ENCODE measurements at regions of chr11 and their contacts with region 1.

Region 1: DNA sequence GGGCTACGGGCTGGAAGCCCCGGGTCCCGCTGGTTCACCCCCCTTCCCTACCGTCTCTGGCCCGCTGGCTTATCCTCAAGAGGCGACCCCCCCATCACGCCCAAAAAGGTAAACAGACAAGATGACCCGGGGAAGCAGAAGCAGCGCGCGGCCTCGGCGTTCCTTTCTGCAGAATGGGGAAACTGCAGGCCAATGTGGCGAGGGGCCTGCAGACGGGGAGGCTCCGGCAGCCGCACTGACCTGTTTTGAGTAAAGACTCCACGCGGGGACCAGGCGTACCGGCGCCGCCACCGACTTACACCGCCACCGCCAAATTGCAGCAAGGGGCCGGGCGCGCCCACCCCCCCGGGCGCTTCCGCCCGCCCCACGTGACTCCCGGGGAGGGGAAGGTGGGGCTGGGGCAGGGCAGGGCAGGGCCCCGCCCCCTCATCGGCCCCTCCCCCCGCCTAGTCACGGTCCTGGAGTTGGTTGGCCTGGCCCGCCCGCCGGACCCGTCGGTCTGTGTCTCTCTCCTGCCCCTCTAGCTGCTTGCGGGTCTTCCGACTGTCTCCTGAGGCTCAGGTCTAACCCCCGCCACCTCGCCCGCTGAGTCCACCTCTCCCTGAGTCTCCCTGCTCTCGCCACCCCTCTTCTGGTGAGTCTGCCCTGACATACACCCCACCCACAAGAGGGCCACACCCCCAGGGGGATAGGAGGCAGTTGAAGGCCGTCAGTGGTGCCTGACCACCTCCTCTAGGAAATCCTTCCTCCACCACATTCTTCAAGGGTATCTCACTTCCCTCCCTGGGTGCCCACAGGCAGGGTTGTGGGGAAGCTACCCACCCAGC is at the start of gene ARAP1:
- DNase-seq: peak; percentile 73 to 85 (median 74)
- H3K4me3 ChIP-seq: peak within 1 kb of the TSS; percentile 78 to 89
- H3K4me3 Mint-ChIP-seq: peak within 1 kb of the TSS; percentile 92 to 99 (median 95)
- H3K27ac ChIP-seq: peak within 1 kb of the TSS; percentile 75
- H3K27ac Mint-ChIP-seq: peak within 1 kb of the TSS; percentile 94 to 98 (median 96)
- H3K4me1 ChIP-seq: peaks cover 50% of the 10 kb centered on the region
- H3K4me1 Mint-ChIP-seq: peaks cover 32 to 55% (median 46%) of the 10 kb centered on the region in 4 donors
- H3K27me3 ChIP-seq: no peaks in the 10 kb centered on the region
- H3K27me3 Mint-ChIP-seq: no peaks in the 10 kb centered on the region
- total RNA-seq, gene ARAP1: 144 to 157 TPM

Region 2: GRCh38 chr11:72454791-72455190 is 297.5 kb before region 1 on chr11:
- CTCF ChIA-PET with region 1: no interaction called
- POLR2A ChIA-PET with region 1: no interaction called
- intact Hi-C with region 1: no loop called
- DNase-seq: no peak
- H3K4me3 ChIP-seq: no peak overlapping the region
- H3K4me3 Mint-ChIP-seq: no peak overlapping the region
- H3K27ac ChIP-seq: no peak overlapping the region
- H3K27ac Mint-ChIP-seq: no peak overlapping the region
- H3K4me1 ChIP-seq: no peaks in the 10 kb centered on the region
- H3K4me1 Mint-ChIP-seq: no peaks in the 10 kb centered on the region
- H3K27me3 ChIP-seq: no peaks in the 10 kb centered on the region
- H3K27me3 Mint-ChIP-seq: peaks cover 4 to 11% of the 10 kb centered on the region in 2 donors

Region 3: GRCh38 chr11:72736452-72737069 is 15.7 kb before region 1 on chr11:
- CTCF ChIA-PET with region 1: interaction called, 3 read pairs
- POLR2A ChIA-PET with region 1: interaction called, 9 read pairs
- intact Hi-C with region 1: loop called (anchors 2 kb)
- DNase-seq: peak; percentile 71 to 90 (median 78)
- H3K4me3 ChIP-seq: no peak overlapping the region
- H3K4me3 Mint-ChIP-seq: peak overlapping the region; percentile 6 to 74 (median 54)
- H3K27ac ChIP-seq: peak overlapping the region; percentile 54
- H3K27ac Mint-ChIP-seq: peak overlapping the region; percentile 89 to 100 (median 98)
- H3K4me1 ChIP-seq: peaks cover 59% of the 10 kb centered on the region
- H3K4me1 Mint-ChIP-seq: peaks cover 43 to 65% (median 54%) of the 10 kb centered on the region in 4 donors
- H3K27me3 ChIP-seq: no peaks in the 10 kb centered on the region
- H3K27me3 Mint-ChIP-seq: no peaks in the 10 kb centered on the region

Region 4: DNA sequence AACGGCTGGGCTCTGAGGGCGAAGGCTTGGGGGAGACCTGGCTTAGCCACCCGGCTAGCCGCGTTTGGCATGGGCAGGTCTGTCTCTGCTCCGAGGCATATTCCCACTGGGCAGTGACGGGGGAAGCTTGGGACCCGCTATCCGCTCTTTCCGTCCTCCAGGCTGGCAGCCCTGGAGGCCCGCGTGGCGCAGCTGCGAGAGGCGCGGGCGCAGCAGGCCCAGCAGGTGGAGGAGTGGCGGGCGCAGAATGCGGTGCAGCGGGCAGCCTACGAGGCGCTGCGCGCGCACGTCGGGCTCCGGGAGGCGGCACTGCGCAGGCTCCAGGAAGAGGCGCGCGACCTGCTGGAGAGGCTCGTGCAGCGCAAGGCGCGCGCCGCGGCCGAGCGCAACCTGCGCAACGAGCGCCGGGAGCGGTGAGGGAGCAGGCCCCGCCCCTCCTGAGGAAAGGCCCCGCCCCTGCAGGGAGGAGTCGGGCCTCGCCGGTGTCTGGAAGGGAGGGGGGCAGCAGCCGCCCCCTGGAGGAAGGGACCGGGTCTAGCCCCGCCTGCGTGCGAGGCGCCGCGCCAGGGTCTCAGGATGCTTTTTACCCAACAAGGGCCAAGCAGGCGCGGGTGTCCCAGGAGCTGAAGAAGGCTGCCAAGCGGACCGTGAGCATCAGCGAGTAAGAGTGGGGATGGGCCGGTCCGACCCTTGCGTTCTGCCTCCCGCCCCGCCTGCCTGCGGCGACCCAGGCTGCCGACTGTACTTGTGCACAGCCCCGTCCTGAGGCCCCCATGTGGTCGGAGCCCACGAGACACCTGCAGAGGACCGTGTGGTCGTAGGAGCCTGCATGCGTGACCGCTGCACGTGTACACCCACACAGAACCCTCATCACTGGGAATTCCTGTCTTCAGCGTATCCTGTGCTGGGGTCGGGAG is 69.8 kb after region 1 on chr11:
- CTCF ChIA-PET with region 1: no interaction called
- POLR2A ChIA-PET with region 1: no interaction called
- intact Hi-C with region 1: loop called (anchors 2 kb)
- DNase-seq: peak; percentile 81 to 93 (median 86)
- H3K4me3 ChIP-seq: no peak overlapping the region
- H3K4me3 Mint-ChIP-seq: peak overlapping the region in 5 of 8 donors; percentile 8 to 62 (median 31)
- H3K27ac ChIP-seq: peak overlapping the region; percentile 45
- H3K27ac Mint-ChIP-seq: peak overlapping the region in 6 of 7 donors; percentile 17 to 93 (median 68)
- H3K4me1 ChIP-seq: peaks cover 14% of the 10 kb centered on the region
- H3K4me1 Mint-ChIP-seq: peaks cover 17 to 35% (median 22%) of the 10 kb centered on the region in 4 donors
- H3K27me3 ChIP-seq: no peaks in the 10 kb centered on the region
- H3K27me3 Mint-ChIP-seq: no peaks in the 10 kb centered on the region

Region 5: GRCh38 chr11:72924568-72925190 is 172.4 kb after region 1 on chr11:
- CTCF ChIA-PET with region 1: no interaction called
- POLR2A ChIA-PET with region 1: no interaction called
- intact Hi-C with region 1: no loop called
- DNase-seq: peak in 4 of 5 donors; percentile 19 to 39 (median 26)
- H3K4me3 ChIP-seq: no peak overlapping the region
- H3K4me3 Mint-ChIP-seq: no peak overlapping the region
- H3K27ac ChIP-seq: no peak overlapping the region
- H3K27ac Mint-ChIP-seq: peak overlapping the region in 2 of 7 donors; percentile 37 to 69
- H3K4me1 ChIP-seq: no peaks in the 10 kb centered on the region
- H3K4me1 Mint-ChIP-seq: peaks cover 5 to 14% (median 7%) of the 10 kb centered on the region in 4 donors
- H3K27me3 ChIP-seq: no peaks in the 10 kb centered on the region
- H3K27me3 Mint-ChIP-seq: no peaks in the 10 kb centered on the region